Caco-2 (cell line): ENCODE measurements at regions of chr15 and their contacts with region 1.

Region 1: DNA sequence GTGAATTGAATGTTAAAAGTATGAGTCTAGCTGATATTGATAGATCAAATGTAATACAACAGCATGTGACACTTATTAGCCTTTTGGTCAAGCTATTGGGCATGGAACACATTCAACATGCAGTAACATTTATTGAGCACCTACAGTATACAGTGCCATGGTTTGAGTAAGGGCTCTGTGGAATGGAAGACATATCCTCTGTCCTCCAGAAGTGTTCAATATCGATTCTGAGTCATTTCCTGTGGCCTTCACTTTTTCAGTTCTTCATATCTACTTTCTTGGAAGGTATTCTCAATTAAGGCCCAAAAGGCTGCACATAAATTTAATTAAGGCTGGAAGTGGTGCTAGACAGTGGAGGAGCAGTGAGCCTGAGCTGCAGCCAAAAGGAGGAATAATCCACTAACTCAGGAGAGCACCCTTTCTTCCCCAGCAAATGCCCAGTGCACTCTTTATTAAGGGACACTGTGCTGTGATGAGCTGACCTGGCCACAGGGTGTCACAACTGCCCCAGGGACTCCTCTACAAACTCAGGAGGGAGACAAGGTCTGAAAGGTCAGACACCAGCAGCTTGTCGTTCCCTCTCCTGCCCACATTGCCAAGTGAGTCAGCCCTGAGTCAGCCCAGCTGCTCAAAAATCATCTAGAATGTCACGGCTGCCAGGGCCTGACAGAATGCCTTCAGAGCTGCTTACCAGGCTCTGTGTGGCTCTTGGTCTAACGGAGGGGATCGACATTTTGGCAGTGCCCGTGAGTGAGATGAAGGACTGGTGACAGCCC is 544.8 kb downstream of the AGBL1 start:
- DNase-seq: peak; percentile 81 to 84
- H3K4me3 ChIP-seq: no peak overlapping the region
- H3K4me3 Mint-ChIP-seq: no peak overlapping the region
- H3K27ac Mint-ChIP-seq: no peak overlapping the region
- H3K4me1 ChIP-seq: peaks cover 17% of the 10 kb centered on the region
- H3K4me1 Mint-ChIP-seq: peaks cover 17% of the 10 kb centered on the region
- H3K27me3 ChIP-seq: no peaks in the 10 kb centered on the region
- H3K27me3 Mint-ChIP-seq: no peaks in the 10 kb centered on the region
- CTCF ChIP-seq: peak; percentile 53 to 66

Region 2: DNA sequence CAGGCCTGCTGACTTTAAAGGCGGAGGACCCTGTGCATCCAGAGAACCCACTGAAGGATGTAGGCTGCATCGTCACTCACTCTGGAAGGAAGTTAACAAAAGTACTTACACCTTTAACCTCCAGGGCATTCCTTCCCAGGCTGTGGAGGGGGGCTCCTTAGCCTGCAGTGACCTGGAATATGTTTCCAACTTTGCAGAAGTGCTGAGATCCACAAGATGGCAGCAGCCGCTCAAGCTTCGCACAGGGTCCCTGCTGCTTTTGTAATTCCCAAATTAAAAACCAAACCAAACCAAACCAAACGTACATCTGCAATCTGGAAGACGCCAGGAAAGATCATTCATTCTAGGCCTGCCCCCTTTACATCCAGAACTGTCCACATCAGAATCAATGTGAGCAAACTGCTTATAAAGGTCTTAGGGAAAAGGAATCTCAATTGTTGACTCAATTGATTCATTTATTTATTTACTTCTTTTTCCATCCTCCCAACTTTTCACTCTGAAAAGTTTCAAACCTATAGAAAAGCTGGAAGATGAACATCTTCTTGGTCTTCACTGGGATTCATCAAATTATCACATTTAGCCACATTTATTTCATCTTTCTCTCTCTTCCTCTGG is 759.3 kb before region 1 on chr15:
- CTCF ChIA-PET with region 1: no interaction called
- POLR2A ChIA-PET with region 1: no interaction called
- intact Hi-C with region 1: loop called (anchors 5 kb)
- DNase-seq: peak; percentile 50 to 65
- H3K4me3 ChIP-seq: no peak overlapping the region
- H3K4me3 Mint-ChIP-seq: no peak overlapping the region
- H3K27ac Mint-ChIP-seq: no peak overlapping the region
- H3K4me1 ChIP-seq: no peaks in the 10 kb centered on the region
- H3K4me1 Mint-ChIP-seq: no peaks in the 10 kb centered on the region
- H3K27me3 ChIP-seq: no peaks in the 10 kb centered on the region; the same call in 1 of the 2 replicates
- H3K27me3 Mint-ChIP-seq: peaks cover 32% of the 10 kb centered on the region
- CTCF ChIP-seq: peak; percentile 72 to 80

Region 3: GRCh38 chr15:86572368-86572841 is 52.0 kb before region 1 on chr15:
- CTCF ChIA-PET with region 1: no interaction called
- POLR2A ChIA-PET with region 1: no interaction called
- intact Hi-C with region 1: no loop called
- DNase-seq: no peak
- H3K4me3 ChIP-seq: no peak overlapping the region
- H3K4me3 Mint-ChIP-seq: no peak overlapping the region
- H3K27ac Mint-ChIP-seq: no peak overlapping the region
- H3K4me1 ChIP-seq: no peaks in the 10 kb centered on the region
- H3K4me1 Mint-ChIP-seq: no peaks in the 10 kb centered on the region
- H3K27me3 ChIP-seq: no peaks in the 10 kb centered on the region
- H3K27me3 Mint-ChIP-seq: no peaks in the 10 kb centered on the region
- CTCF ChIP-seq: no peak

Region 4: DNA sequence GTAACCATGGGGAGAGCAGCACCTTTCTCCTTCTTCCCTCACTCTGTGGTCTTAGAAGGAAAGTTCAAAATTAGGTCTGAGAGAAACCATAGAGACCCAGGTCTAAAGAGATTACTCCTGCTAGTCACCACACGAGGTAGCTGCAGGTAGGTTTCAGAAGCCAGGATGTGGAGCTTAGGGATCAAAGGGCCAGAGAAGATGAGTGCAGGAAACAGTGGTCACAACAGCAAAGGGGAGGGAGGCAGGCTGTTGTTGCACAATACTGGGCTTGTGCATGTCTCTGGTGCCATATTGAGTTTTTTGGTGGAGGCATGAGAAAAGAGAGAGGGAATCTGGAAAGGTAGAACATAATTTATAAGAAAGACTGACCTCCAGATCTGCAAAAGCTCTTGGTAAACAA is 38.9 kb after region 1 on chr15:
- CTCF ChIA-PET with region 1: no interaction called
- POLR2A ChIA-PET with region 1: no interaction called
- intact Hi-C with region 1: no loop called
- DNase-seq: no peak
- H3K4me3 ChIP-seq: no peak overlapping the region
- H3K4me3 Mint-ChIP-seq: no peak overlapping the region
- H3K27ac Mint-ChIP-seq: no peak overlapping the region
- H3K4me1 ChIP-seq: no peaks in the 10 kb centered on the region
- H3K4me1 Mint-ChIP-seq: no peaks in the 10 kb centered on the region
- H3K27me3 ChIP-seq: no peaks in the 10 kb centered on the region
- H3K27me3 Mint-ChIP-seq: no peaks in the 10 kb centered on the region
- CTCF ChIP-seq: no peak

Region 5: GRCh38 chr15:86743283-86743903 is 118.9 kb after region 1 on chr15:
- CTCF ChIA-PET with region 1: interaction called, 25 read pairs
- POLR2A ChIA-PET with region 1: no interaction called
- intact Hi-C with region 1: loop called (anchors 1 kb)
- DNase-seq: peak; percentile 54 to 67
- H3K4me3 ChIP-seq: no peak overlapping the region
- H3K4me3 Mint-ChIP-seq: no peak overlapping the region
- H3K27ac Mint-ChIP-seq: no peak overlapping the region
- H3K4me1 ChIP-seq: no peaks in the 10 kb centered on the region
- H3K4me1 Mint-ChIP-seq: no peaks in the 10 kb centered on the region
- H3K27me3 ChIP-seq: no peaks in the 10 kb centered on the region
- H3K27me3 Mint-ChIP-seq: no peaks in the 10 kb centered on the region
- CTCF ChIP-seq: peak; percentile 67 to 83

Region 6: GRCh38 chr15:86756692-86757091 is 132.2 kb after region 1 on chr15:
- CTCF ChIA-PET with region 1: no interaction called
- POLR2A ChIA-PET with region 1: no interaction called
- intact Hi-C with region 1: no loop called
- DNase-seq: no peak
- H3K4me3 ChIP-seq: no peak overlapping the region
- H3K4me3 Mint-ChIP-seq: no peak overlapping the region
- H3K27ac Mint-ChIP-seq: no peak overlapping the region
- H3K4me1 ChIP-seq: no peaks in the 10 kb centered on the region
- H3K4me1 Mint-ChIP-seq: no peaks in the 10 kb centered on the region
- H3K27me3 ChIP-seq: no peaks in the 10 kb centered on the region; the same call in 1 of the 2 replicates
- H3K27me3 Mint-ChIP-seq: peaks cover 3% of the 10 kb centered on the region
- CTCF ChIP-seq: no peak

Region 7: DNA sequence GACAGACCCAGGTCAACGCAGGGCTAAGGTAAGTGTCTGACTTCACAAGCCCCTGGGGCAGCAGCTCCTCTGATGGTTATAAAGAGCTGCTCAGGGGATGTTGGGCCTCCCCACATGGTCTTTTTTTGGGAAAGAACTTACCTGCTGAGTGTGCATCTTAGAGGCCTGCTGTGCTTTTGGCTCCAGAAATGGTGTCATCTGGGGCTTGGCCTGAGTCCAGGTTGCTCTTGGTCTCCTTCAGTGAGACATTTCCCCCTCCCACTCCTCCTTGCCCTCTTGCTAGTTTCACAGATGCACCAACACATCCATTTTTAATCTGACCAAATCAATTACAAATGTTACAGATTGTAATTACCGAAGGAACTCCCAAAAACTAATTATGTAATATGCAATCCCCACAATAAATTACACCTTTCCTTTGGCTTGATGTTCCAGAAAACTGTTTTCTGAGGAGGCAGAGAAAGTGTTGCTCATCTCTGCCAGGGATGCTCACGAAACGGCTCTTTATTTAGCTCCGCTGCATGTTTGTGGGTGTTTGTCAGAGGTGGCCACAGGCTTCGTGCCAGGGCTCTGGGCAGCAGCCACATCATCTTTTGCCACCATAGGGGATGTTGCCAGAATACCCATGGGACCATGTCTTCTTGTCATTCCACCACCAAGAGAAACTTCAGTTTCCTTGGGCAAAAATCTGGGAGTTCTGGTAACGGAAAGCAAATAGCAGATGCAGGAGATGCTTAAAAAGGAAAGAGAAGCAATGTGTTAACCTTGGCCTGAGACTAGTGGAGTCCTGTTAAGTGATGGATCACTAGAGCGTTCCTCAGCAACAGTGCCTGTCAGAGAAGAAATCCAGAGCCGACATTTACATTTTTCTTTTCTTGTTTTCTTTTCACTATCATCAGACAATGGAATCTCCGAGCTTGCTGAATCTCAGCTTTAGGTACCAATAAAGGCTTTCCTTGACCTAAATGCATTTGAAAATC is 255.1 kb after region 1 on chr15:
- CTCF ChIA-PET with region 1: no interaction called
- POLR2A ChIA-PET with region 1: no interaction called
- intact Hi-C with region 1: loop called (anchors 10 kb)
- DNase-seq: no peak
- H3K4me3 ChIP-seq: no peak overlapping the region
- H3K4me3 Mint-ChIP-seq: no peak overlapping the region
- H3K27ac Mint-ChIP-seq: no peak overlapping the region
- H3K4me1 ChIP-seq: no peaks in the 10 kb centered on the region
- H3K4me1 Mint-ChIP-seq: no peaks in the 10 kb centered on the region
- H3K27me3 ChIP-seq: no peaks in the 10 kb centered on the region
- H3K27me3 Mint-ChIP-seq: peaks cover 3% of the 10 kb centered on the region
- CTCF ChIP-seq: no peak

Region 8: GRCh38 chr15:87604857-87605446 is 980.5 kb after region 1 on chr15:
- CTCF ChIA-PET with region 1: no interaction called
- POLR2A ChIA-PET with region 1: no interaction called
- intact Hi-C with region 1: loop called (anchors 10 kb)
- DNase-seq: peak in 1 of 2 experiments; percentile 30
- H3K4me3 ChIP-seq: no peak overlapping the region
- H3K4me3 Mint-ChIP-seq: no peak overlapping the region
- H3K27ac Mint-ChIP-seq: no peak overlapping the region
- H3K4me1 ChIP-seq: peaks cover 21% of the 10 kb centered on the region
- H3K4me1 Mint-ChIP-seq: peaks cover 28% of the 10 kb centered on the region
- H3K27me3 ChIP-seq: no peaks in the 10 kb centered on the region
- H3K27me3 Mint-ChIP-seq: no peaks in the 10 kb centered on the region
- CTCF ChIP-seq: peak; percentile 32 to 51